Activated naive CD4-positive, alpha-beta T cell treated with anti-CD3 and anti-CD28 coated beads for 36 hours (primary cell): ENCODE measurements at regions of chr6 and their contacts with region 1.

Region 1: DNA sequence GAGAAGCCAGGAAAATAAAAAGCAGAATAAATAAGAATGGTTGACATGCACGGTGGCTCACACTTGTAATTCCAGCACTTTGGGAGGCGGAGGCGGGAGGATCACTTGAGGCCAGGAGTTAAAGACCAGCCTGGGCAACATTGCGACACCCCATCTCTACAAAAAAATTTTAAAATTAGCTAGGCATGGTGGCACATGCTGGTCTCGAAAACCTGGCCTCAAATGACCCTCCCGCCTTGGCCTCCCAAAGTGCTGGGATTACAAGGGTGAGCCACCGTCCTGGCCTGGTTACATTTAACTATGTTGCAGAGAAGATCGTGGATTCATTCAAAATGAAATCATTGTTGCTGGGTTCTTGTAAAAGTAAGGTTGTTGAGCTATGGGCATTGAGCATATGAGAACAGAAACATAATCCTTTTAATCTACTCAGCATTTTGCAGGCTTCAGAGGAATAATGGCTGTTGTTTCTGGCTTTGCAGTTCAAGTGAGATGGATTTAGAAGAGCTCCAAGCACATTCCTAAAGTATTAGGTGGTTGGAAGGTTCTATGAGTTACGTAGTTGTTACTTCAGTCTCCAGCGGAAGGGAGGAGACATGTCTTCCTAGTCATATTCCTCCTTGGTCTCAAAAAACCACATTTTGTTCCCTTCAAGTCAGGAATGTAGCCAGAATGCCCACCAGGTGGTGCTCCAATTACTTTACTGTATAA is 45.6 kb upstream of the RAB23 start:
- DNase-seq: peak; percentile 68
- H3K4me3 Mint-ChIP-seq: no peak overlapping the region
- H3K27ac Mint-ChIP-seq: no peak overlapping the region
- H3K4me1 Mint-ChIP-seq: peaks cover 20% of the 10 kb centered on the region
- H3K27me3 Mint-ChIP-seq: peaks cover 10% of the 10 kb centered on the region

Region 2: GRCh38 chr6:56890683-56891429 is 376.9 kb before region 1 on chr6:
- CTCF ChIA-PET with region 1: no interaction called
- intact Hi-C with region 1: loop called (anchors 1 kb)
- DNase-seq: peak; percentile 60
- H3K4me3 Mint-ChIP-seq: no peak overlapping the region
- H3K27ac Mint-ChIP-seq: no peak overlapping the region
- H3K4me1 Mint-ChIP-seq: peaks cover 29% of the 10 kb centered on the region
- H3K27me3 Mint-ChIP-seq: no peaks in the 10 kb centered on the region

Region 3: DNA sequence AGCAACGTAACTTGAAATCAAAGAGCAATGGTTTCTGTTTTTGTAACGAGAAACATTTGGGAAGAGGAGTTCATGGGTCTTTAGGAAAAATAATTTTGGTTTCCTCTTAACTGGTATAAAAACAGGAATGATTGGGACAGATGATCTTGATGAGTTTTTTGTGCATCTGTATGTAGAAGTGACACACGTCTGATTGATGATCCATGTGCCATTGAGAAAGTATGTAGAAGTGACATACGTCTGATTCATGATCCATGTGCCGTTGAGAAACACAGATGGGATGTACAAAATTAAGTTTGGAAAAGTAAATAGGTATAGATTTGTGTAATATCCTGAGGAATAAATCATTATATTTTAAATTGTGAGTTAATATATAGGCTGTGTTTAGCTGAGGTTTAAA is 219.2 kb before region 1 on chr6:
- CTCF ChIA-PET with region 1: no interaction called
- intact Hi-C with region 1: loop called (anchors 2 kb)
- DNase-seq: no peak
- H3K4me3 Mint-ChIP-seq: peak overlapping the region; percentile 68
- H3K27ac Mint-ChIP-seq: no peak overlapping the region
- H3K4me1 Mint-ChIP-seq: peaks cover 21% of the 10 kb centered on the region
- H3K27me3 Mint-ChIP-seq: peaks cover 14% of the 10 kb centered on the region

Region 4: GRCh38 chr6:57089687-57090460 is 177.9 kb before region 1 on chr6 and contains the start of gene ZNF451:
- CTCF ChIA-PET with region 1: no interaction called
- intact Hi-C with region 1: loop called (anchors 5 kb)
- DNase-seq: peak; percentile 98
- H3K4me3 Mint-ChIP-seq: peak within 1 kb of the TSS; percentile 88
- H3K27ac Mint-ChIP-seq: peak within 1 kb of the TSS; percentile 89
- H3K4me1 Mint-ChIP-seq: peaks cover 32% of the 10 kb centered on the region
- H3K27me3 Mint-ChIP-seq: no peaks in the 10 kb centered on the region
- total RNA-seq, gene ZNF451: 43.8 to 46.2 TPM

Region 5: DNA sequence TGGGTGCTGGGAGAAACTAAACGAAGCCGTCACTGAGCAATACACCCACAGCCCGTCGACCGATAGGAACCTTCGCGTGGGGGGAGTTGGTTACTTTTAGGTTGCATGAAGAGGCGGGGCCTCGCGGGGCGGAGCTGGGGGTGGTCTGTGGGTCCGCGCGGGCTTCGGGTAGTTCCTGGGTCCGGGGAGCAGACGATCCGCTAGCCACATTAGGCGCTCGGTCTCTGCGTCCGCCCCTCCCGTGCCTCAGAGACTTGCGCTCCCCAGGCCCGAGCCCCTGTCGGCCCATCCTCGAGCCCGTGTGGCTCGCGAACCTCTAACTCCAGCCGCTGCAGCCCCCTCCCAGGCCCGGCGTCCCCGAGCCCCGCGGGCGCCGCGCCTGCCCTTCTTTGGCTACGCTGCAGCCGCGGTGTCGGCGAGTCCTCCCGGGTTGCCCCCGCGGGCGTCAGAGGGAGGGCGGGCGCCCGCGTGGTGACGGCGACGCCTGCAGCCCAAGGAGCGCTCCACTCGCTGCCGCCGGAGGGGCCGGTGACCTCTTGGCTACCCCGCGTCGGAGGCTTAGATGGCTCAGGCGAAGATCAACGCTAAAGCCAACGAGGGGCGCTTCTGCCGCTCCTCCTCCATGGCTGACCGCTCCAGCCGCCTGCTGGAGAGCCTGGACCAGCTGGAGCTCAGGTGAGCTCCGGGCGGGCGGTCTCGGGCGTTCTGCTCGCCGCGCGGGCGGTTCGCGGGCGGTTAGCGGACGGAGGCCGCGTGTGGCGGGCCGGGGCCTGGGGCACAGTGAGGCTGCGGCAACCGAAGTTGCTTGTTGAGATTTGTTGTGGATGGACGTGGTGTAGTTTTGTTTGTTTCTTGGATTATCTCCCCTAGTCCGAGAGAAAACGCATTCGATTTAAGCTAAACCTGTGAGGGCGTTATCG is 95.3 kb before region 1 on chr6 and contains the start of gene BAG2:
- CTCF ChIA-PET with region 1: no interaction called
- intact Hi-C with region 1: loop called (anchors 1 kb)
- DNase-seq: peak; percentile 88
- H3K4me3 Mint-ChIP-seq: peak within 1 kb of the TSS; percentile 92
- H3K27ac Mint-ChIP-seq: peak within 1 kb of the TSS; percentile 85
- H3K4me1 Mint-ChIP-seq: peaks cover 31% of the 10 kb centered on the region
- H3K27me3 Mint-ChIP-seq: no peaks in the 10 kb centered on the region
- total RNA-seq, gene BAG2: 6.8 to 7.0 TPM

Region 6: GRCh38 chr6:57207141-57207540 is 60.6 kb before region 1 on chr6:
- CTCF ChIA-PET with region 1: interaction called, 4 read pairs
- intact Hi-C with region 1: loop called (anchors 1 kb)
- DNase-seq: no peak
- H3K4me3 Mint-ChIP-seq: no peak overlapping the region
- H3K27ac Mint-ChIP-seq: no peak overlapping the region
- H3K4me1 Mint-ChIP-seq: peaks cover 9% of the 10 kb centered on the region
- H3K27me3 Mint-ChIP-seq: no peaks in the 10 kb centered on the region

Region 7: GRCh38 chr6:57221936-57222742 is 45.6 kb before region 1 on chr6 and contains the start of gene RAB23:
- CTCF ChIA-PET with region 1: interaction called, 3 read pairs
- intact Hi-C with region 1: loop called (anchors 1 kb)
- DNase-seq: peak; percentile 74
- H3K4me3 Mint-ChIP-seq: peak within 1 kb of the TSS; percentile 99
- H3K27ac Mint-ChIP-seq: peak within 1 kb of the TSS; percentile 93
- H3K4me1 Mint-ChIP-seq: peaks cover 14% of the 10 kb centered on the region
- H3K27me3 Mint-ChIP-seq: peaks cover 18% of the 10 kb centered on the region
- total RNA-seq, gene RAB23: 1.1 to 1.7 TPM

Region 8: GRCh38 chr6:57288115-57288514 is 20.4 kb after region 1 on chr6:
- CTCF ChIA-PET with region 1: no interaction called
- intact Hi-C with region 1: no loop called
- DNase-seq: no peak
- H3K4me3 Mint-ChIP-seq: no peak overlapping the region
- H3K27ac Mint-ChIP-seq: no peak overlapping the region
- H3K4me1 Mint-ChIP-seq: no peaks in the 10 kb centered on the region
- H3K27me3 Mint-ChIP-seq: peaks cover 24% of the 10 kb centered on the region